Endothelial cell of umbilical vein (primary cell): ENCODE measurements at regions of chr4 and their contacts with region 1.

Region 1: DNA sequence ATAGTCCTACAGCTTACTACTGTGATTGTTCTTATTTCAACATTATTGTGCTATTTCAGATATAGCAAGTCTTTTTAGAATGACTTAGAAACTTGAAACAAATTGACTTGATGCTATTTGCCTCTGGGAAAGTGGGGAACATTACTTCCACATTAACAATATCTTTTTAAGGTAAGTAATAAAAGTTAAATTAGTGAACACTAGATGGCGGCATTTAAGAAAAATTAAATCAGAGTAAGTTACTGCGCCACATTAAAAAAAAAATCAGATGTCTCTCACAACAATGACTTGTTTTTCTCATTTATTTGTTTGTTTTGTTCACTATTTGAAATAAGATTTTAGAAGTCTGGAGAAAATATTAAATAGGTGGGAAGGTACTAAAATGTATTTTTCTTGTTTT is 1026.9 kb upstream of the SLIT2 start:
- DNase-seq: peak; percentile 49
- H3K4me3 ChIP-seq: no peak overlapping the region
- H3K27ac ChIP-seq: no peak overlapping the region
- H3K4me1 ChIP-seq: no peaks in the 10 kb centered on the region
- H3K27me3 ChIP-seq: no peaks in the 10 kb centered on the region
- CTCF ChIP-seq: no peak
- POLR2A ChIP-seq: no peak

Region 2: GRCh38 chr4:18689308-18690115 is 535.3 kb before region 1 on chr4:
- CTCF ChIA-PET with region 1: no interaction called
- POLR2A ChIA-PET with region 1: no interaction called
- dilution Hi-C with region 1: no loop called
- intact Hi-C with region 1: loop called (anchors 10 kb)
- DNase-seq: peak; percentile 77
- H3K4me3 ChIP-seq: no peak overlapping the region
- H3K27ac ChIP-seq: no peak overlapping the region
- H3K4me1 ChIP-seq: peaks cover 2% of the 10 kb centered on the region
- H3K27me3 ChIP-seq: no peaks in the 10 kb centered on the region
- CTCF ChIP-seq: peak; percentile 57 to 68
- POLR2A ChIP-seq: no peak

Region 3: GRCh38 chr4:19266566-19266965 is 41.7 kb after region 1 on chr4:
- CTCF ChIA-PET with region 1: no interaction called
- POLR2A ChIA-PET with region 1: no interaction called
- dilution Hi-C with region 1: no loop called
- intact Hi-C with region 1: no loop called
- DNase-seq: no peak
- H3K4me3 ChIP-seq: no peak overlapping the region
- H3K27ac ChIP-seq: no peak overlapping the region
- H3K4me1 ChIP-seq: no peaks in the 10 kb centered on the region
- H3K27me3 ChIP-seq: no peaks in the 10 kb centered on the region
- CTCF ChIP-seq: no peak
- POLR2A ChIP-seq: no peak

Region 4: DNA sequence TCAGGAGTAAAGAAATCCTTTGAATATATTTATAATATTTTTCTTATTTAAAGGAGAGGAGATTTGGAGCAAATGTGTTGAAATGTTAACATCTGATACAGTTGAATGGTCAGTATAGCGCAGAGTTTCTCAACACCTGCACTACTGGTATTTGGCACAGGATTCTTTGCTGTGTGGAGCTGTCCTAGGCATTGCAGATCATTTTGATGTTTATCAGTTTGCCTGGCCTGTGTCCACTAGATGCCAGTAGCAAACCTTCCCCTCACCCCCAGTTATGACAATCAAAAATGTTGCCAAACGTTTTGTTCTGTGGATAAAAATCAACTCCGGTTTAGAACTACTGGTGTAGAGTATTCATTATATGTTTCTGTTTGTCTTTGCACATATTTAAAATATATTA is 261.6 kb after region 1 on chr4:
- CTCF ChIA-PET with region 1: no interaction called
- POLR2A ChIA-PET with region 1: no interaction called
- dilution Hi-C with region 1: no loop called
- intact Hi-C with region 1: loop called (anchors 10 kb)
- DNase-seq: peak; percentile 44
- H3K4me3 ChIP-seq: no peak overlapping the region
- H3K27ac ChIP-seq: no peak overlapping the region
- H3K4me1 ChIP-seq: no peaks in the 10 kb centered on the region
- H3K27me3 ChIP-seq: no peaks in the 10 kb centered on the region
- CTCF ChIP-seq: peak in 1 of 2 donors; percentile 24
- POLR2A ChIP-seq: no peak

Region 5: DNA sequence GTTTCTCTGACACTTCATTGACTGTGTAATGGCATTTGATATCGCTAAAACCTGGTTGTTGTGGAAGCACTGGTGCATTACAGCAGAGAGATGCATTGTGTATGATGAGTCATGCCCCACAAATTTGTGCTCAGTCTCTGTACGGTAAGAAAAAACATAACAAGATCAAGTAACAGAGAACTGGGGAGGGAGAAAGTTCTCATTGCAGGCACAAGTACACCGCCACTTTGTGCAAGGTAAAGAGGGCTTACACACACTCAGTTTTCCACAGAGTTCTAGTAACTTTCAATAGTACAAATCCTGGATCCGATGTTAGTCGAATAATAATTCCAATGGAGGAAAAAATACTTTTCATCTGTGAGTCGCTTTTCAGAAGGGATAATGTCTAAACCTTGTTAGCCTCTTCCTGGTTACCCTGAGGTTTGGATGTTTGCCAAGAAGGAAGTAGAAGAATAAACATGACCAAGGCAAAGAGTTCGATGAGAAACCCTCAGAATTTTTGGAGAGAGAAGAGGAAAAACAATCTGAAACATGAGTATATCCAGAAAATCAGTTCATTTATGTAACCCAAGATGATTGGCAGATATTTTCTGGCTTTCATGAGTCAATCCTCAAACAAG is 514.4 kb after region 1 on chr4:
- CTCF ChIA-PET with region 1: no interaction called
- POLR2A ChIA-PET with region 1: no interaction called
- dilution Hi-C with region 1: no loop called
- intact Hi-C with region 1: loop called (anchors 10 kb)
- DNase-seq: peak; percentile 96
- H3K4me3 ChIP-seq: peak overlapping the region in 2 of 3 experiments; percentile 9 to 41
- H3K27ac ChIP-seq: peak overlapping the region; percentile 84
- H3K4me1 ChIP-seq: peaks cover 22% of the 10 kb centered on the region
- H3K27me3 ChIP-seq: no peaks in the 10 kb centered on the region
- CTCF ChIP-seq: no peak
- POLR2A ChIP-seq: no peak